PC-9 (cell line): ENCODE measurements at regions of chr16 and their contacts with region 1.

Region 1: GRCh38 chr16:2267913-2268666 is at the start of gene RNPS1:
- DNase-seq: peak; percentile 83 to 96
- H3K4me3 ChIP-seq: peak within 1 kb of the TSS; percentile 92
- H3K27ac ChIP-seq: peak within 1 kb of the TSS; percentile 89
- H3K4me1 ChIP-seq: peaks cover 14% of the 10 kb centered on the region
- H3K27me3 ChIP-seq: no peaks in the 10 kb centered on the region
- CTCF ChIP-seq: no peak
- total RNA-seq, gene RNPS1: 229 and 250 TPM in 2 replicates

Region 2: GRCh38 chr16:2223375-2224182 is 44.5 kb before region 1 on chr16 and contains the start of gene E4F1:
- CTCF ChIA-PET with region 1: no interaction called
- POLR2A ChIA-PET with region 1: no interaction called
- intact Hi-C with region 1: loop called (anchors 1 kb)
- DNase-seq: peak; percentile 96 to 100
- H3K4me3 ChIP-seq: peak within 1 kb of the TSS; percentile 83
- H3K27ac ChIP-seq: peak within 1 kb of the TSS; percentile 24
- H3K4me1 ChIP-seq: peaks cover 20% of the 10 kb centered on the region
- H3K27me3 ChIP-seq: no peaks in the 10 kb centered on the region
- CTCF ChIP-seq: no peak
- total RNA-seq, gene E4F1: 38.8 and 41.1 TPM in 2 replicates

Region 3: DNA sequence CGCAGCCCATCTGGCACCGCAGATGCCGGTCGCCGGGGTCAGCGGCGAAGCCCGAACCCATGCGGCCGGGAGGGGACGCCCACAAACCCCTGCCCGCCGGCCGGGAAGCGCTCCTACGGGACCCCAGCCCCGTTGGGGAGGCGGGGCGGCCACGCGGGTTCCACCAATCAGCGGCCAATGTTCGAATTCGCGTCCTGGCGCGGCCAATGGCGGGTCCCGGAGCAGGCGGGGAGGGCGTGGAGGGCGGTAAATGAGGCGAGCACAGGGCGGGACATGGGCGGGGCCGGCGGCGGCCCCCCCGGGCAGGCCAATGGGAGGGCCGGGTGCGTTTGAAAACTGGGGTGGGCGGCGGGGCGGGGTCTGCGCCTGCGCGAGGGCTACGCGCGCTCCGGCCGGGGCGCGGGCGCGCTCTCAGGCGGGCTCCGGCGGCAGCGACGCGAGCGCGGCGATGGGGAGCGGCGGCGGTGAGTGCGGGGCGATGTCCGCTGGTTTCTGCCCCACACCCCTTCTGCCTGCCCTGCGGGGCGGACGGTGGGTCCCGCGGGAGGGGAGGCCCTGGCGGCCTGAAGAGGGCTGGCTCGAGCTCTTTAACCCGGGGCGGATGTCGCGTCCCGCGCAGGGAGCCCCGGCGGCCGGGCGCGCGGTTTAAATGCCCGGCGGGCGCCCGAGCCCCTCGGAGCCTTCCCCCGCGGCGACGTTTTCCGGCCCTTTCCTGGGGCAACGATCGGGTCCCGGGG is 161.1 kb after region 1 on chr16 and contains the start of gene CCNF:
- CTCF ChIA-PET with region 1: no interaction called
- POLR2A ChIA-PET with region 1: no interaction called
- intact Hi-C with region 1: loop called (anchors 2 kb)
- DNase-seq: peak; percentile 80 to 98
- H3K4me3 ChIP-seq: peak within 1 kb of the TSS; percentile 99
- H3K27ac ChIP-seq: no peak within 1 kb of the TSS
- H3K4me1 ChIP-seq: peaks cover 40% of the 10 kb centered on the region
- H3K27me3 ChIP-seq: no peaks in the 10 kb centered on the region
- CTCF ChIP-seq: no peak
- total RNA-seq, gene CCNF: 53.4 and 69.0 TPM in 2 replicates